ENCODE measurements at regions of chr1 and their contacts with region 1.

Region 1: GRCh38 chr1:40404670-40405462 is 31.3 kb downstream of the SMAP2 start:
- DNase-seq: peak; percentile 49
- H3K4me3 ChIP-seq: no peak overlapping the region; a peak in 1 of 4 replicates
- H3K27ac ChIP-seq: no peak overlapping the region
- H3K4me1 ChIP-seq: no peaks in the 10 kb centered on the region; a peak in 2 of 4 replicates
- H3K27me3 ChIP-seq: no peaks in the 10 kb centered on the region
- CTCF ChIP-seq: peak; percentile 94
- EP300 ChIP-seq: no peak
- RAD21 ChIP-seq: peak; percentile 89

Region 2: GRCh38 chr1:40373338-40374283 is 31.3 kb before region 1 on chr1 and contains the start of gene SMAP2:
- CTCF ChIA-PET with region 1: interaction called, 19 read pairs
- POLR2A ChIA-PET with region 1: no interaction called
- DNase-seq: peak; percentile 99
- H3K4me3 ChIP-seq: peak within 1 kb of the TSS; percentile 91 to 93
- H3K27ac ChIP-seq: peak within 1 kb of the TSS; percentile 71 to 78
- H3K4me1 ChIP-seq: peaks cover 0 to 10% of the 10 kb centered on the region in 2 experiments; a peak in 2 of 4 replicates
- H3K27me3 ChIP-seq: no peaks in the 10 kb centered on the region
- CTCF ChIP-seq: no peak
- EP300 ChIP-seq: no peak
- RAD21 ChIP-seq: no peak
- polyA plus RNA-seq, gene SMAP2: 11.2 and 12.7 TPM in 2 replicates

Region 3: GRCh38 chr1:40385437-40386358 is 19.2 kb before region 1 on chr1:
- CTCF ChIA-PET with region 1: interaction called, 37 read pairs
- POLR2A ChIA-PET with region 1: no interaction called
- DNase-seq: no peak
- H3K4me3 ChIP-seq: no peak overlapping the region
- H3K27ac ChIP-seq: no peak overlapping the region
- H3K4me1 ChIP-seq: peaks cover 24 to 43% of the 10 kb centered on the region in 2 experiments; a peak in 3 of 4 replicates
- H3K27me3 ChIP-seq: no peaks in the 10 kb centered on the region
- CTCF ChIP-seq: no peak
- EP300 ChIP-seq: no peak
- RAD21 ChIP-seq: no peak

Region 4: GRCh38 chr1:40392221-40392620 is 12.6 kb before region 1 on chr1:
- CTCF ChIA-PET with region 1: interaction called, 37 read pairs
- POLR2A ChIA-PET with region 1: no interaction called
- DNase-seq: no peak
- H3K4me3 ChIP-seq: no peak overlapping the region
- H3K27ac ChIP-seq: peak overlapping the region in 1 of 2 experiments; percentile 52; a peak in 1 of 4 replicates
- H3K4me1 ChIP-seq: peaks cover 0 to 15% of the 10 kb centered on the region in 2 experiments; a peak in 1 of 4 replicates
- H3K27me3 ChIP-seq: no peaks in the 10 kb centered on the region
- CTCF ChIP-seq: no peak
- EP300 ChIP-seq: no peak
- RAD21 ChIP-seq: no peak

Measured in SK-N-SH (cell line).